ENCODE measurements at regions of chr15 and their contacts with region 1.

Region 1: GRCh38 chr15:49620658-49621368 is at the starts of genes DTWD1 and FAM227B:
- DNase-seq: peak; percentile 93
- H3K4me3 Mint-ChIP-seq: peak within 1 kb of the TSS; percentile 90
- H3K27ac Mint-ChIP-seq: peak within 1 kb of the TSS; percentile 91
- H3K4me1 Mint-ChIP-seq: peaks cover 39% of the 10 kb centered on the region
- H3K27me3 Mint-ChIP-seq: no peaks in the 10 kb centered on the region
- total RNA-seq, gene DTWD1: 22.0 and 24.0 TPM in 2 replicates
- total RNA-seq, gene FAM227B: 2.7 and 3.1 TPM in 2 replicates

Region 2: DNA sequence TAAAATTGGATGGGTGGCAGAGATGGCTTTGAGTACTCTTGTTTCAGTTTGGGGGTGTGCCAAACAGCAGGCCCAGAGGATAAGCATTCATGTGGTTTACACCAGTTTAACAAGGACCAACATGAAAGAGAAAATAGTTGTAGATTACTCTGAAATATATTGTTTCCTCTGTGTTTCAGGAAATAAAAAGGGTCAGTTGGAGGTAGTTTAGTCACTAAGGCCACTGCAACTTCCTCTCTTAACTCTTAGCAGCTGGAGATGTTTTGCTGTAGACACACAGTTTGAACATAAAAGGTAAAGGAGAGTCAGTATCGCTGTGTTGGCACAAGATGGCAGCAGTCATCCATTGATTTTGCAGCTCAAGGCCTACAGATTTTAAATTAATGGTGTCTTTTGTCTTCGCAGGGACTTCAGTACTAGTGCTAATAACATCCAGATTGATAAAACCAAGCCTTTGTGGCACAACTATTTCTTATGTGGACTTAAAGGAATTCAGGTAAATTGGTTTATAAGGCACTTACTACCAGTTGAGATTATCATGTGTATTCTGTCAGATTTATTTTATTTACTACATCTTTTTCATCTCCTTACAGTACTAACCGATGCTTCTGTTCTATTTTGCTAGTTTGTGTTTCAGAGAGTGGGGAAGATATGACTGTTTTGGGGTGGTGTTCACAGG is 385.2 kb before region 1 on chr15:
- intact Hi-C with region 1: no loop called
- DNase-seq: peak; percentile 42
- H3K4me3 Mint-ChIP-seq: no peak overlapping the region
- H3K27ac Mint-ChIP-seq: peak overlapping the region; percentile 14
- H3K4me1 Mint-ChIP-seq: peaks cover 20% of the 10 kb centered on the region
- H3K27me3 Mint-ChIP-seq: no peaks in the 10 kb centered on the region

Region 3: GRCh38 chr15:49286649-49287404 is 334.0 kb before region 1 on chr15:
- intact Hi-C with region 1: loop called (anchors 5 kb)
- DNase-seq: no peak
- H3K4me3 Mint-ChIP-seq: no peak overlapping the region
- H3K27ac Mint-ChIP-seq: peak overlapping the region; percentile 73
- H3K4me1 Mint-ChIP-seq: peaks cover 34% of the 10 kb centered on the region
- H3K27me3 Mint-ChIP-seq: no peaks in the 10 kb centered on the region

Region 4: GRCh38 chr15:50590288-50590687 is 969.5 kb after region 1 on chr15:
- intact Hi-C with region 1: loop called (anchors 5 kb)
- DNase-seq: no peak
- H3K4me3 Mint-ChIP-seq: no peak overlapping the region
- H3K27ac Mint-ChIP-seq: no peak overlapping the region
- H3K4me1 Mint-ChIP-seq: peaks cover 5% of the 10 kb centered on the region
- H3K27me3 Mint-ChIP-seq: no peaks in the 10 kb centered on the region

Measured in activated T-helper 2 cell treated with anti-CD3 and anti-CD28 coated beads, Interferon-gamma antibody, Interleukin-2, Interleukin-4, amounts not matched to agents 10 μg/mL and 5 μg/mL and 100 μg/mL, durations not matched to agents 14 hours and 24 hours and 36 hours (primary cell).